Posterior vena cava (tissue), 2 donors: ENCODE measurements at regions of chr7 and their contacts with region 1.

Region 1: GRCh38 chr7:26667500-26668133 is 196.8 kb downstream of the SKAP2 start:
- DNase-seq: no peak

Region 2: GRCh38 chr7:26993816-26994810 is 326.5 kb after region 1 on chr7:
- intact Hi-C with region 1: loop called in 1 of 2 experiments (anchors 5 kb)
- DNase-seq: no peak